Activated CD4-positive, alpha-beta T cell treated with anti-CD3 and anti-CD28 coated beads, Interleukin-2, amount 10 ng/mL, durations not matched to agents 7 days and 5 days (primary cell): ENCODE measurements at regions of chr6 and their contacts with region 1.

Region 1: GRCh38 chr6:116268589-116269293 is 11.0 kb downstream of the TSPYL1 start:
- DNase-seq: no peak
- H3K4me3 Mint-ChIP-seq: no peak overlapping the region
- H3K27ac Mint-ChIP-seq: no peak overlapping the region
- H3K4me1 Mint-ChIP-seq: peaks cover 11% of the 10 kb centered on the region
- H3K27me3 Mint-ChIP-seq: no peaks in the 10 kb centered on the region

Region 2: GRCh38 chr6:116253505-116254296 is 15.0 kb before region 1 on chr6 and contains the start of gene TSPYL4:
- CTCF ChIA-PET with region 1: interaction called, 13 read pairs
- POLR2A ChIA-PET with region 1: no interaction called
- DNase-seq: peak; percentile 94
- H3K4me3 Mint-ChIP-seq: no peak within 1 kb of the TSS
- H3K27ac Mint-ChIP-seq: no peak within 1 kb of the TSS
- H3K4me1 Mint-ChIP-seq: peaks cover 4% of the 10 kb centered on the region
- H3K27me3 Mint-ChIP-seq: no peaks in the 10 kb centered on the region
- total RNA-seq, gene TSPYL4: 17.0 to 18.8 TPM